Esophagus muscularis mucosa (tissue), 4 donors: ENCODE measurements at regions of chr5 and their contacts with region 1.

Region 1: DNA sequence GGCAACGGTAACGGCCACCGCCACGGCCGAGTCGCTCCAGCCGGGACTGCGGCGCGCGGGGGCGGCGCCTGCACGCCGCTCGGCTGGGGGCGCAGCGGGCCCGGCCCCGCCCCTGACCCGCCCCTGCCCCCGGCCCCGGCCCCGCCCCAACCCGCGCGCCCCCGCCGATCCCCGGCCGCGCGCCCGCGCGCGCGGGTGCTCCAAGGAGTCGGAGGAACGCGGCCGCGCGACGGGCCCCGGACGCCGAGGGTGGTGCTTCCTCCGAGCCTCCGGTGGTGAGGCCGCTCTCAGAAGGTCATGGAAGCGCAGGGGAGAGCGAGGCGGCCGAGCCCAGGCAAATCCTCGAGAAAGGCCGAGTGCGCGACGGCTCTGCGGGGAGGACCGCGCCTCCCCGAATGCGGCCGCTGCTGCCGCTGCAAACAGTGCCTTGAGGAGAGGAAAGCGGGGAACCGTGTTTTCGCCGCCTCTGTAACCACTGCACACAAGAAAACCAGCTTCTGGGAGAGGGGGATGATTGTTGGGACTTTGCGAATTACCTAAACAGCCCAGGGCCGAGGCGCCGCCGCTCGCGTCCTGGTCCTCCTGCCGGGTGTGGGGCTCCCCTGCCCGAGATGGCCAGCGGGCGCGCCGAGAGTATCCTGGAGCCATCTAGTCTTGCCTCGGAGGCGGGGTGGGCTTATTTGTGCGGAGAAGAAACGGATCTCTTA is at the start of gene LIFR:
- DNase-seq: no peak
- H3K4me3 ChIP-seq: peak within 1 kb of the TSS; percentile 81 to 98 (median 92)
- H3K27ac ChIP-seq: peak within 1 kb of the TSS; percentile 89 to 98 (median 96)
- H3K4me1 ChIP-seq: peaks cover 9 to 45% (median 31%) of the 10 kb centered on the region in 4 donors
- H3K27me3 ChIP-seq: no peaks in the 10 kb centered on the region
- CTCF ChIP-seq: peak in 1 of 3 experiments; percentile 7
- EP300 ChIP-seq: no peak
- POLR2A ChIP-seq: peak; percentile 60
- total RNA-seq, gene LIFR: 72.3 to 102 (median 90.1) TPM

Region 2: GRCh38 chr5:38373743-38374142 is 183.0 kb before region 1 on chr5:
- intact Hi-C with region 1: no loop called
- DNase-seq: no peak
- H3K4me3 ChIP-seq: no peak overlapping the region
- H3K27ac ChIP-seq: no peak overlapping the region
- H3K4me1 ChIP-seq: no peaks in the 10 kb centered on the region
- H3K27me3 ChIP-seq: peaks cover 0 to 15% (median 0%) of the 10 kb centered on the region in 4 donors
- CTCF ChIP-seq: no peak
- EP300 ChIP-seq: no peak
- POLR2A ChIP-seq: no peak

Region 3: DNA sequence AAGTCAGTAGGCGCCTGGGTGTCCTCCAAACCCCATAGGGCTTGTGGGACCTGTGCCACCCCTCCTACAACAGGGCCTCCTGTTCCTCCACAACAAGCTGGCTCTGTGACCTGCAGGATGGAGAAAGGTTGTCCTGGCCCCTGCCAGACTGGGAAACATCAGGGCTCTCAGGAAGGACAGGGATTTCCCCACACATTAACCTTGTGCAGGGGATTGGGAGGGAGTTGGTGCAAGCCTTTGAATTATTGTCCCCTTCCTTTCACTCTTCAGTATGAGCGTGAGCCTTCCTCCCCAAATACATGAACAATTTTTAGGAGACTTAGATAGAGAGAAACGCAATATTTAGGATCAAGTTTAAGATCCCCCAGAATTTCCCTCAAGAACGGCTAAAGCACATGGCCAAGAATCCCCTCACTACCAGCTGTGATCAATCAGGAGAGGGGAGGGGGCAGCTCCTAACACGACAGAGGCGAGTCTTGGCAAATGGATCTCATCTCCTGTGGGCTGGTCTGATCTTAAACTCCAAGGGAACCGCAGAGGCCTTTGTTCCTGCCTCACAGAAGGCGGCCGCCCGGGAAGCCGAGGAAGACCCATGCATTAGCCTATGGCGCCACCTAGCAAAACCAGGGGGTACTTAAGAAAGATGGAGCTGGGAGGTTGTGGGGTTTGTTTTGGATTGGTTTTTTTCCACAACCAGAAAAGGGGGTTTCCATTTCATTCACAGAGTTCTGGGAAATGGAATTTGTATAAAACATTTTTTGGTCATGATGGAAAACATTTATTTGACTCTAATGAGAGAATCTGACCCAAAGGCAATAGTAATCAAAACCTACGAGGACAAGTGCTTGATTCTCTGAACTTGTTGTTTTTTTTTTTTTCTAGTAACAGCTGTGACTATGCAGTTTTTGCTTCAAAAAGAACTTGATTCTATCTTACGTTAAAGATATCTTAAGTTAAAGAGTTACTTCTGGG is 252.9 kb after region 1 on chr5:
- intact Hi-C with region 1: loop called (anchors 10 kb)
- DNase-seq: peak; percentile 96
- H3K4me3 ChIP-seq: no peak overlapping the region
- H3K27ac ChIP-seq: peak overlapping the region in 2 of 4 donors; percentile 23 to 52
- H3K4me1 ChIP-seq: peaks cover 12 to 43% (median 19%) of the 10 kb centered on the region in 4 donors
- H3K27me3 ChIP-seq: no peaks in the 10 kb centered on the region
- CTCF ChIP-seq: peak; percentile 75 to 87 (median 85)
- EP300 ChIP-seq: no peak
- POLR2A ChIP-seq: no peak